CD4-positive, alpha-beta memory T cell (primary cell): ENCODE measurements at regions of chr20 and their contacts with region 1.

Region 1: DNA sequence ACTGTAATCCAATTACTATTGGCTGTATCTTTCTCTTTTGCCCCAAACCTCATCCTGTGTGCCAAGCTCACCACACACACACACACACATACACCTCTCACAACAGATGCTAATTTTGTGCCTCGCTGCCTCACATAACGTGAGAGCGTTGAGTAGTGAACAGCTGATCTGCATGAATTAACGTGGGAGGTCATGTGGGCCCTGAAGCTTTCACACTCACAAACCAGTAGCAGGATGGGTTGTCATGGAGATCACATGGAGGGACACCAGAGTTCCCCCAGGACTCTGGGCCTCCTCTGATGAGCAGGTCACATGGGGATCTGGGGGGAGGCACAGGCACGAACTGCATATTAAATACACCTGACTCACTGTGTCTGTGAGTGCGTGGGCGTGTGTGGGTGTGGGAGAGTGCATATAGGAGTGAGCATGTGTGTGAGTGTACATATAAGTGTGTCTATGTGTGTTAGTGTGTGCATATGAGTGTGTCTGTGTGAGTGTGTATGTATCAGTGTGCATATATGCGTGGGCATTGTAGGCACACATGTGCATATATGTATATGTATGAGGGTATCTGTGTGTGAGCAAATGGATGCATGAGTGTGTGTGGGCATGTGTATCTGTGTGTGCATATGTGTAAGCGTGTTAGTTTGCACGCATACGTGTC is 62.7 kb upstream of the SULF2 start:
- DNase-seq: no peak
- H3K4me3 ChIP-seq: no peak overlapping the region
- H3K4me3 Mint-ChIP-seq: no peak overlapping the region
- H3K27ac ChIP-seq: no peak overlapping the region
- H3K27ac Mint-ChIP-seq: no peak overlapping the region
- H3K4me1 ChIP-seq: no peaks in the 10 kb centered on the region
- H3K4me1 Mint-ChIP-seq: peaks cover 0 to 1% (median 0%) of the 10 kb centered on the region in 4 donors
- H3K27me3 ChIP-seq: no peaks in the 10 kb centered on the region
- H3K27me3 Mint-ChIP-seq: peaks cover 8 to 33% of the 10 kb centered on the region in 2 donors

Region 2: GRCh38 chr20:47886460-47887041 is 38.6 kb after region 1 on chr20:
- CTCF ChIA-PET with region 1: no interaction called
- POLR2A ChIA-PET with region 1: no interaction called
- intact Hi-C with region 1: loop called (anchors 5 kb)
- DNase-seq: no peak
- H3K4me3 ChIP-seq: no peak overlapping the region
- H3K4me3 Mint-ChIP-seq: no peak overlapping the region
- H3K27ac ChIP-seq: no peak overlapping the region
- H3K27ac Mint-ChIP-seq: no peak overlapping the region
- H3K4me1 ChIP-seq: no peaks in the 10 kb centered on the region
- H3K4me1 Mint-ChIP-seq: no peaks in the 10 kb centered on the region
- H3K27me3 ChIP-seq: no peaks in the 10 kb centered on the region
- H3K27me3 Mint-ChIP-seq: peaks cover 5 to 7% of the 10 kb centered on the region in 2 donors